ENCODE measurements at regions of chr5 and their contacts with region 1.

Region 1: DNA sequence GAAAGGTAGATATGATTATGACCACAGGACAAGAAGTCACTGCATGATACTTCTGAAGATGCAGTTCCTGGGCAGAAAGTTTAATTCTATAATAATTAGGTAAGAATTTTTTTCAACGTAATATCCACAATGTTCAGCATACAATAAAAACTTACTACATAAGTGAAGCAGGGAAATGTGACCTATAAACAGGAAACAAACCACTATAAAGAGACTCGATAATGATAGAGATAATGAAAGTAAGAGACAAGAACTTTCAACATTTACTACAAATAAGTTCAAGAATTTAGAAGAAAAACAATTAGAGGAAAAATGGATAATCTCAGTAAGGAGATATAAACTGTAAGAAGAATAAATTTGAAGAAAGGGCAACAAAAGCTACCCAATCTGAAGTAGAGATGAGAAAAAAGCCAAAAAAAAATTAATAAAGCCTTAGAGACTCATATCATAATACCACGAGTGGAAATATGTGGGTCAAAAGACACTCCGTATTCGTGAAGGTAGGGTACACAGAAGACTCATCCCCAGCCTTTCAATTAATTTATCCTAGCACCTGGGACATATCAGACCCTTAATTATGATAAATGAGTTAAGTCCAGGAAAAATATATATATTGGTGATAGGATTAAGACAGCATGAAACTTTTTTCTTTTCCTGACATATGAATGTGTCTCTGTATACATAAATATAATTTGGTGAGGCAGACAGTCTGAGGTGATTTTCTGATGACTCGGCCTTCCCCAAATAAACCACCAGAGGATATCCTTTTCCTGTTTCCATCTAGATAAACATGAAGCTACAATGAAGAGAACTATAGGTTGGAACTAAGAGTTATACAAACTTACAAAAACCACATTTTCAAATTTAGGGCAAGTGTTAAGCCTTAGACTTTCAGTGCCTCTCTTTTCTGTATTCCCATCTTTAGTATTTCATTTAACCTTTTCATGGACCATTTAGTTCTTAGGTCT is 120.4 kb downstream of the RAPGEF6 start:
- DNase-seq: peak in 1 of 3 donors; percentile 30
- H3K4me3 ChIP-seq: no peak overlapping the region
- H3K4me3 Mint-ChIP-seq: peak overlapping the region in 1 of 2 donors; percentile 32
- H3K27ac ChIP-seq: no peak overlapping the region
- H3K27ac Mint-ChIP-seq: peak overlapping the region in 4 of 7 donors; percentile 0 to 72 (median 34)
- H3K4me1 ChIP-seq: peaks cover 15 to 19% of the 10 kb centered on the region in 2 donors
- H3K4me1 Mint-ChIP-seq: peaks cover 19% of the 10 kb centered on the region
- H3K27me3 ChIP-seq: no peaks in the 10 kb centered on the region
- H3K27me3 Mint-ChIP-seq: no peaks in the 10 kb centered on the region
- CTCF ChIP-seq: peak; percentile 21

Region 2: DNA sequence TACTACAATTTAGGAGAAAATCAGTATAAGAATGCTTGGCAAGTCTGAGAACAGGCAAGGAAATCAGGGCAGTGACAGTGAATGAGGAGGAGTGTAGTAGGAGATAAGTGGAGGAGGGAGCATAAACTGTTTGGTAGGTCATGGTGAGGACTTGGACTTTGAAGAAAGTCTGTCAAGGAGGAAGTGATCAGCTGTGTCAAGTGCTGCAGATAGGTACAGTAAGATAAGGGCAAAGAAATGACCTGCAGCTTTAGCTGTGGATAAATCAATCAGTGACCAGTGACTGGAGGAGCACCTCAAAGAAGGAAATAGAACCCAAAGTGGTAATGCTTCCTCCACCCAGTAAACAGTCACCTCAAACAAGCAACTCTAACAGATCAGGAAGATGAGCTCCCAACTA is 14.1 kb after region 1 on chr5:
- intact Hi-C with region 1: loop called in 1 of 2 experiments (anchors 2 kb)
- DNase-seq: peak in 1 of 3 donors; percentile 5
- H3K4me3 ChIP-seq: no peak overlapping the region
- H3K4me3 Mint-ChIP-seq: no peak overlapping the region
- H3K27ac ChIP-seq: no peak overlapping the region
- H3K27ac Mint-ChIP-seq: peak overlapping the region in 6 of 7 donors; percentile 4 to 80 (median 52)
- H3K4me1 ChIP-seq: peaks cover 17 to 33% of the 10 kb centered on the region in 2 donors
- H3K4me1 Mint-ChIP-seq: peaks cover 35% of the 10 kb centered on the region
- H3K27me3 ChIP-seq: no peaks in the 10 kb centered on the region
- H3K27me3 Mint-ChIP-seq: no peaks in the 10 kb centered on the region
- CTCF ChIP-seq: no peak